Dorsolateral prefrontal cortex (tissue), 120 donors: ENCODE measurements at regions of chr2 and their contacts with region 1.

Region 1: GRCh38 chr2:177332041-177332991 is 60.3 kb upstream of the AGPS start:
- DNase-seq: peak in 3 of 10 donors; percentile 26 to 36 (median 34)
- H3K4me3 ChIP-seq: peak overlapping the region in 47 of 59 donors; percentile 1 to 58 (median 33)
- H3K27ac ChIP-seq: peak overlapping the region in 53 of 59 donors; percentile 4 to 85 (median 60)
- H3K27me3 ChIP-seq: no peaks in the 10 kb centered on the region
- CTCF ChIP-seq: peak; percentile 53 to 87 (median 78)

Region 2: GRCh38 chr2:177212106-177212890 is 120.0 kb before region 1 on chr2 and contains the start of gene HNRNPA3:
- intact Hi-C with region 1: loop called in 1 of 2 experiments (anchors 5 kb)
- DNase-seq: peak; percentile 98 to 100 (median 99)
- H3K4me3 ChIP-seq: peak within 1 kb of the TSS; percentile 69 to 95 (median 86)
- H3K27ac ChIP-seq: peak within 1 kb of the TSS; percentile 95 to 100 (median 99)
- H3K27me3 ChIP-seq: no peaks in the 10 kb centered on the region
- CTCF ChIP-seq: peak in 53 of 56 donors; percentile 9 to 69 (median 49)
- total RNA-seq, gene HNRNPA3: 105 to 187 (median 137) TPM

Region 3: DNA sequence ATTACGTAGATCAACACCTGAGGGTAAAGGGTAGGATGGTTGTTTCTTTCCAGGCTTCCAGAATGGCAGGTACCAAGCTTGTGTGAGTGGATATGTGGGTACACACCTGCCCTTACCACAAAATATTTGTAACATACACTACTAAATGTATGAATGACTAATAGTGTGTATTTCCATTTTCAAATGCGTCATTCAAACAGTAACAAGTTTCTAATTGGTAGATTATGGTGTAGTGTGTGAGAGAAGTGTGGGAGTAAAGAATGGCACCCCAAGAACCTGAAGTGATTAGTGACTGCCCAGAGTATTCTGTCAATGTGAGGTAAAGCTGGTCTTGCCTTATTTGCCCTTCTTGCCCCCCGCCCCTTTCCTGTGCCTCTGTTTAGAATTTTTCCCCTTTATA is 81.4 kb after region 1 on chr2:
- intact Hi-C with region 1: loop called (anchors 2 to 5 kb)
- DNase-seq: no peak
- H3K4me3 ChIP-seq: no peak overlapping the region
- H3K27ac ChIP-seq: no peak overlapping the region
- H3K27me3 ChIP-seq: no peaks in the 10 kb centered on the region
- CTCF ChIP-seq: no peak

Region 4: GRCh38 chr2:177604271-177605065 is 272.2 kb after region 1 on chr2:
- intact Hi-C with region 1: loop called (anchors 5 to 10 kb)
- DNase-seq: peak in 1 of 10 donors; percentile 14
- H3K4me3 ChIP-seq: peak overlapping the region in 4 of 59 donors; percentile 9 to 28 (median 20)
- H3K27ac ChIP-seq: peak overlapping the region in 3 of 59 donors; percentile 13 to 38 (median 33)
- H3K27me3 ChIP-seq: no peaks in the 10 kb centered on the region
- CTCF ChIP-seq: peak; percentile 36 to 85 (median 72)

Region 5: GRCh38 chr2:177763532-177764265 is 431.4 kb after region 1 on chr2:
- intact Hi-C with region 1: loop called in 1 of 2 experiments (anchors 5 kb)
- DNase-seq: peak in 9 of 10 donors; percentile 32 to 73 (median 55)
- H3K4me3 ChIP-seq: peak overlapping the region in 12 of 59 donors; percentile 16 to 42 (median 24)
- H3K27ac ChIP-seq: no peak overlapping the region
- H3K27me3 ChIP-seq: peaks cover 0 to 6% (median 0%) of the 10 kb centered on the region in 45 donors
- CTCF ChIP-seq: peak; percentile 56 to 88 (median 79)

Region 6: DNA sequence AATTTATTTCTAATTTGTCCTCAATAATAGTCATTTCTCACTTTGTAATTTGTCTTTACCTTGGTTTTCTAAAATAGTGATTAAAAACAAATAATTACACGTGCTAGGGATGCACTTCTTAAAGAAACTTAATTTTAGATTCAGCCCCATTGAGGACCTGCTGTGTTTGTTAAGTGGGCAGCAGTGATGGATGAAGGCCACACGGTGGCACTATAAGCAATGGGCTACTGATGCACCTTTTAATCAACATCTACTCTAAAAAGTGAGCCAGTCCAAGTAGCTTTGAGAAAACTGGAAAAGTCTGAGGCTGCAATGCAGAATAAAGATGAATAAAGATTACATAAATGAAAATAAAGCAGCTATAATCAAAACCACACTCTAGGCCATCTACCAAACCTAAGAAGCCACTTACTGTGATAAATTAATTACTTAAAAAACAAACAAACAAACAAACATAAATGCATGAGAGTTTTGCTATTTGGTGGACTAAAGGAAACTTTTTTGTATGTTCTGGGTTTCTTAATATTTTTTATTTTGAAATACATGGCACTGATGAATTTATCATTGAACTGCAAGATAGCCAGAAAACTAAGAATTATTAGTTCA is 651.0 kb after region 1 on chr2:
- intact Hi-C with region 1: no loop called
- DNase-seq: peak in 3 of 10 donors; percentile 11 to 38 (median 11)
- H3K4me3 ChIP-seq: no peak overlapping the region
- H3K27ac ChIP-seq: no peak overlapping the region
- H3K27me3 ChIP-seq: peaks cover 0 to 15% (median 0%) of the 10 kb centered on the region in 45 donors
- CTCF ChIP-seq: peak in 54 of 56 donors; percentile 14 to 63 (median 52)